CD4-positive, alpha-beta memory T cell (primary cell): ENCODE measurements at regions of chr6 and their contacts with region 1.

Region 1: DNA sequence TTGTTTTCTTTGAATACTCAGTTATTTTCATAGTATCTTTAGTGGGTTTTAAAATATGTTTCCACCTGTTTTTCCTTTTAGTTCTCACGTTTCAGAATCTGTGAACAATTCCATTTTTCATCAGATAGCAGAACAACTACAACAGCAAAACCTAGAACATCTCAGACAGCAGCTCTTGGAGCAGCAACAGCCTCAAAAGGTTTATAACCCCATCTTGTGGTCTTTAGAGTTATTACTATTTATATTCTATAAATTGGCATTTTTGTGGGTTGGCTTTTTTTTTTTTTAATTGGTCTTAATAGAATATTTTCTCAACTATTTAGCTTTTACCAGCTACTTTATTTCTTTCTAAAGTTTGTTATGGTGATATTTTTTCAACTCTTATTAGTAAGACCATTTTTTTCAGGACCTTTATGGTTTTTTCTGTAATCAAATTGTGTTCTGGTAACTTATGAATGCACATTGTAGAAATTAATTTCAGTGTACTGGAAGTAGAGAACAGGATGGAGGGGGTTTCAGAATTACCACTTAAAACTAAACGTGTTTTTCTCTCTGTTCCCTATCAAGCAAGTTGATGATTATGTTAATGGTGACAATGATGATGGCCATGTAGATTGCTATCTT is 72.2 kb downstream of the SCAF8 start:
- DNase-seq: peak in 4 of 5 donors; percentile 34 to 49 (median 45)
- H3K4me3 ChIP-seq: no peak overlapping the region
- H3K4me3 Mint-ChIP-seq: no peak overlapping the region
- H3K27ac ChIP-seq: no peak overlapping the region
- H3K27ac Mint-ChIP-seq: peak overlapping the region in 3 of 7 donors; percentile 22 to 78 (median 75)
- H3K4me1 ChIP-seq: peaks cover 1% of the 10 kb centered on the region
- H3K4me1 Mint-ChIP-seq: peaks cover 1 to 7% (median 2%) of the 10 kb centered on the region in 4 donors
- H3K27me3 ChIP-seq: no peaks in the 10 kb centered on the region
- H3K27me3 Mint-ChIP-seq: no peaks in the 10 kb centered on the region

Region 2: GRCh38 chr6:154156135-154156896 is 649.1 kb before region 1 on chr6:
- CTCF ChIA-PET with region 1: interaction called, 3 read pairs
- POLR2A ChIA-PET with region 1: no interaction called
- intact Hi-C with region 1: loop called (anchors 1 kb)
- DNase-seq: peak; percentile 48 to 76 (median 56)
- H3K4me3 ChIP-seq: peak overlapping the region; percentile 32 to 46
- H3K4me3 Mint-ChIP-seq: peak overlapping the region; percentile 67 to 92 (median 84)
- H3K27ac ChIP-seq: peak overlapping the region; percentile 72
- H3K27ac Mint-ChIP-seq: peak overlapping the region; percentile 84 to 94 (median 93)
- H3K4me1 ChIP-seq: peaks cover 45% of the 10 kb centered on the region
- H3K4me1 Mint-ChIP-seq: peaks cover 38 to 66% (median 49%) of the 10 kb centered on the region in 4 donors
- H3K27me3 ChIP-seq: no peaks in the 10 kb centered on the region
- H3K27me3 Mint-ChIP-seq: no peaks in the 10 kb centered on the region

Region 3: DNA sequence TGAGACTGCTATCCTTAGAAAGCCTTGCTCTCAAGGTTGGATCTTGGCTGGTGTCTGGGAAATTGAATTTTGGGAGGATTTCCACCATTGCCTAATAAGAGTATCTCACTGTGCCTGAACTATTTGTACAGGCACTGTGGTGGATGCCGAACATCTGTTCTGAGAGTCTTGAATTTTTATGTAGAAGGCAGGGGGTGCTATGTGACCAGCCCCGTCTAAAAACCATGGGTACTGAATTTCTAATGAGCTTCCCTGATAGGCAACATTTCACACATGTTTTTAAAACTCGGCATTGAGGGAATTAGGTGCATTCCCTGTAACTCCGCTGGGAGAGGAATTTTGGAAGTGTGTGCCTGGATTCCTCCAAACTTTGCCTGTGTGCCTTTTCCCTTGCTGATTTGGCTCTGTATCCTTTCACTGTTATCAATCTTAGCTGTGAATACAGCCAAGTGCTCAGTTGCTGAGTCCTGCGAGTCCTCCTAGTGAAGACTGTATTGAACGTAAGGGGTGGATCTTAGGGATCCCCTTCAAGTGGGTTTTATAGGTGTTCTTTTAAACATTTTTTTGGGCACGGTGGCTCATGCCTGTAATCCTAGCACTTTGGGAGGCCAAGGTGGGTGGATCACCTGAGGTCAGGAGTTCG is 99.8 kb before region 1 on chr6:
- CTCF ChIA-PET with region 1: interaction called, 9 read pairs
- POLR2A ChIA-PET with region 1: no interaction called
- intact Hi-C with region 1: loop called (anchors 1 kb)
- DNase-seq: peak in 1 of 5 donors; percentile 6
- H3K4me3 ChIP-seq: no peak overlapping the region
- H3K4me3 Mint-ChIP-seq: no peak overlapping the region
- H3K27ac ChIP-seq: no peak overlapping the region
- H3K27ac Mint-ChIP-seq: no peak overlapping the region
- H3K4me1 ChIP-seq: no peaks in the 10 kb centered on the region
- H3K4me1 Mint-ChIP-seq: no peaks in the 10 kb centered on the region
- H3K27me3 ChIP-seq: peaks cover 3% of the 10 kb centered on the region
- H3K27me3 Mint-ChIP-seq: peaks cover 10 to 11% of the 10 kb centered on the region in 2 donors

Region 4: GRCh38 chr6:154733012-154733625 is 72.3 kb before region 1 on chr6 and contains the start of gene SCAF8:
- CTCF ChIA-PET with region 1: interaction called, 6 read pairs
- POLR2A ChIA-PET with region 1: interaction called, 4 read pairs
- intact Hi-C with region 1: loop called (anchors 1 kb)
- DNase-seq: peak; percentile 77 to 93 (median 88)
- H3K4me3 ChIP-seq: peak within 1 kb of the TSS; percentile 63 to 68
- H3K4me3 Mint-ChIP-seq: peak within 1 kb of the TSS; percentile 87 to 95 (median 90)
- H3K27ac ChIP-seq: peak within 1 kb of the TSS; percentile 91
- H3K27ac Mint-ChIP-seq: peak within 1 kb of the TSS; percentile 82 to 98 (median 95)
- H3K4me1 ChIP-seq: peaks cover 45% of the 10 kb centered on the region
- H3K4me1 Mint-ChIP-seq: peaks cover 26 to 48% (median 36%) of the 10 kb centered on the region in 4 donors
- H3K27me3 ChIP-seq: no peaks in the 10 kb centered on the region
- H3K27me3 Mint-ChIP-seq: no peaks in the 10 kb centered on the region
- total RNA-seq, gene SCAF8: 59.9 to 60.5 TPM

Region 5: DNA sequence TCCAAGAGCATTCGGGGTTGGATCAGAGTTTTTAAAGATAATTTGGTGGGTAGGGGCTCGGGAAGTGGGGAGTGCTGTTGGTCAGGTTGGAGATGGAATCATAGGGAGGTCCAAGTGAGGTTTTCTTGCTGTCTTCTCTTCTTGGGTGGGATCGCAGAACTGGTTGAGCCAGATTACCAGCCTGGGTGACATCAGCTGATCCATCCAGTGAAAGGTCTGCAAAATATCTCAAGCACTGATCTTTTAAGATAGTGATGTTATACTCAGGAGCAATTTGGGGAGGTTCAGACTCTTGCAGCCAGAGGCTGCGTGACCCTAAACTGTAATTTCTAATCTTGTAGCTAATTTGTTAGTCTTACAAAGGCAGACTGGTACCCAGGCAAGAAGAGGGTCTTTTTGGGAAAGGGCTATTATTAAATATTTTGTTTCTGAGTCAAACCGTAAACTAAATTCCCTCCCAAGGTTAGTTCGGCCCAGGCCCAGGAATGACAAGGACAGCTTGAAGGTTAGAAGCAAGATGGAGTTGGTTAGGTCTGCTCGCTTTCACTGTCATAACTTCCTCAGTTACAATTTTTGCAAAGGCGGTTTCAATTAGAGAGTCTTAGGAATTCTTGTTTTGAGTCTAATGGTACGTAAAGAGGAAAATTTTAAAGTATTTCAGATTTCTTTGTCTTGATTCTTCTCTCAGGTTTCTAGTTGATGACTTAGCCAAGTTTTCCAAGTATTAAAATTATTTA is 19.1 kb before region 1 on chr6:
- CTCF ChIA-PET with region 1: interaction called, 11 read pairs
- POLR2A ChIA-PET with region 1: no interaction called
- intact Hi-C with region 1: no loop called
- DNase-seq: no peak
- H3K4me3 ChIP-seq: no peak overlapping the region
- H3K4me3 Mint-ChIP-seq: no peak overlapping the region
- H3K27ac ChIP-seq: no peak overlapping the region
- H3K27ac Mint-ChIP-seq: peak overlapping the region in 1 of 7 donors; percentile 7
- H3K4me1 ChIP-seq: peaks cover 23% of the 10 kb centered on the region
- H3K4me1 Mint-ChIP-seq: peaks cover 21 to 55% (median 39%) of the 10 kb centered on the region in 4 donors
- H3K27me3 ChIP-seq: no peaks in the 10 kb centered on the region
- H3K27me3 Mint-ChIP-seq: no peaks in the 10 kb centered on the region